ENCODE measurements at regions of chr9 and their contacts with region 1.

Region 1: GRCh38 chr9:109182940-109183798 is 16.1 kb upstream of the FRRS1L start:
- DNase-seq: peak; percentile 48
- ATAC-seq: no peak
- H3K4me3 Mint-ChIP-seq: no peak overlapping the region
- H3K27ac Mint-ChIP-seq: no peak overlapping the region
- H3K4me1 Mint-ChIP-seq: peaks cover 13% of the 10 kb centered on the region
- H3K27me3 Mint-ChIP-seq: peaks cover 14% of the 10 kb centered on the region

Region 2: GRCh38 chr9:108885643-108886348 is 297.4 kb before region 1 on chr9:
- CTCF ChIA-PET with region 1: interaction called, 3 read pairs
- POLR2A ChIA-PET with region 1: no interaction called
- intact Hi-C with region 1: loop called in 1 of 2 experiments (anchors 1 kb)
- DNase-seq: peak; percentile 81
- ATAC-seq: peak; percentile 100
- H3K4me3 Mint-ChIP-seq: peak overlapping the region; percentile 50
- H3K27ac Mint-ChIP-seq: peak overlapping the region; percentile 77
- H3K4me1 Mint-ChIP-seq: peaks cover 20% of the 10 kb centered on the region
- H3K27me3 Mint-ChIP-seq: no peaks in the 10 kb centered on the region

Region 3: DNA sequence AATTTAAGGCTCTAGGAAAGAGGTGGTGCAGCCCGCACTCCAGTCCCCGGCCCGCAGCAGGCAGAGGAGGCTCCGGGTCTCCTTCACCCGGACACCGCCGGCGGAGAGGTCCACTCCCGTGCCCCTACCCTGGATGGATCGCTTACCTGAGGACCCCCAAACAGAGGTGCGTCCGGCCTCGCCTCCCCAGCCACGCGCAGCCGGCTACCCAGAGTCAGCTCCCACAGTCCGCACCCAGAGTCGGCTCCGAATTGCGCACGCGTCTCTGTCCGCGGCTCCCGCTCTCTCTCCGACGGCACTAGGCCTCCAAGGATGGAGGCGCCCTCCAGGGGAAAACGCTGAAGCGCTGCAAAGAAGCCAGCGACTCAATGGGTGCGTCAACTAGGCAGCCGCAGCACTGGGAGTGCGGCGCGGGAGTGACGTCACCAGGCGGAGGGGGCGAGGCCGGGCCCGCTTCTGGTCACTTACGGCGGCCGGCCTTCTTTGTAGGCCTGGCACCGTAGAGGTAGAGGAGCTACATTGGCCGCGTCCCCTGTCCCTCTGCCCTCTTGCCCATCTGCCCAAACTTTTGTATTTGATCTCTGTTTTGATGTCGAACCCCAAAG is 249.3 kb before region 1 on chr9 and contains the start of gene ELP1:
- CTCF ChIA-PET with region 1: no interaction called
- POLR2A ChIA-PET with region 1: no interaction called
- intact Hi-C with region 1: loop called in 1 of 2 experiments (anchors 1 kb)
- DNase-seq: peak; percentile 96
- ATAC-seq: peak; percentile 88
- H3K4me3 Mint-ChIP-seq: peak within 1 kb of the TSS; percentile 98
- H3K27ac Mint-ChIP-seq: peak within 1 kb of the TSS; percentile 95
- H3K4me1 Mint-ChIP-seq: peaks cover 29% of the 10 kb centered on the region
- H3K27me3 Mint-ChIP-seq: no peaks in the 10 kb centered on the region
- total RNA-seq, gene ELP1: 31.1 to 58.0 TPM

Region 4: DNA sequence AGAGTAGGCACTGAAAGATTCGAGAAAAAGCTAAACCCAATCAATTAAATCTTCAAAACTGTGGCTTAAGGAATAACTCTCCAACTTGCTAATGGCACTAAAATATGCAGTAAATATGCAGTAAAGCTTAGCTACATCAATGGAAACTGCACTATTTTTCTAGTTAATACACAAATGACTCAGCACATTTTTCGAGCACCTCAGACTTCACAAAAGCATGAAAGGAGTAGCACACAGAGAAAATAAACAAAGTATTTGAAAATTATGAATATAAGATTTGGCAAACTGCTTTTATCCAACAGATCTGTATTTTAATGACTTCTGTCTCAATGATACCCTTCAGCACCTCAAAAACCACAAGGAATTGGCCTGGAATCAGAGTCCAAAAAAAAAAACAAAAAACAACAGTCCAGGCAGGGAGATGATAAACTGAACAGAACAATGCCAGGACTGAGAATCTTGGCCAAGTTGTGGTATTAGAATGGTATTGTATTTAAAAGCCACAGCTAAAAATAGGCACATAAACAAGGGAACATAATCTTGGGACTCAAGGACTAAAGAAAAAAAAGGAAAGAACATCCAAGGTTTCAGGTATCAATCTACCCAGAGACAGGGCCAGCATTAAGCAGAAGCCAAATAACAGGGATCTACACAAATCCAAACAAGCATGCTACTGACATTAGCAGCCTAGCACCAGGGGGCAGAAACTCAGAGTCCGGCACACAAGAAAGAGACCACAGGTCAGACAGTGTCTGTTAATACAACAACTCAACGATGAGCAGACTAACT is 84.8 kb before region 1 on chr9:
- CTCF ChIA-PET with region 1: no interaction called
- POLR2A ChIA-PET with region 1: no interaction called
- intact Hi-C with region 1: loop called in 1 of 2 experiments (anchors 5 kb)
- DNase-seq: no peak
- ATAC-seq: no peak
- H3K4me3 Mint-ChIP-seq: no peak overlapping the region
- H3K27ac Mint-ChIP-seq: peak overlapping the region; percentile 89
- H3K4me1 Mint-ChIP-seq: peaks cover 92% of the 10 kb centered on the region
- H3K27me3 Mint-ChIP-seq: no peaks in the 10 kb centered on the region

Region 5: DNA sequence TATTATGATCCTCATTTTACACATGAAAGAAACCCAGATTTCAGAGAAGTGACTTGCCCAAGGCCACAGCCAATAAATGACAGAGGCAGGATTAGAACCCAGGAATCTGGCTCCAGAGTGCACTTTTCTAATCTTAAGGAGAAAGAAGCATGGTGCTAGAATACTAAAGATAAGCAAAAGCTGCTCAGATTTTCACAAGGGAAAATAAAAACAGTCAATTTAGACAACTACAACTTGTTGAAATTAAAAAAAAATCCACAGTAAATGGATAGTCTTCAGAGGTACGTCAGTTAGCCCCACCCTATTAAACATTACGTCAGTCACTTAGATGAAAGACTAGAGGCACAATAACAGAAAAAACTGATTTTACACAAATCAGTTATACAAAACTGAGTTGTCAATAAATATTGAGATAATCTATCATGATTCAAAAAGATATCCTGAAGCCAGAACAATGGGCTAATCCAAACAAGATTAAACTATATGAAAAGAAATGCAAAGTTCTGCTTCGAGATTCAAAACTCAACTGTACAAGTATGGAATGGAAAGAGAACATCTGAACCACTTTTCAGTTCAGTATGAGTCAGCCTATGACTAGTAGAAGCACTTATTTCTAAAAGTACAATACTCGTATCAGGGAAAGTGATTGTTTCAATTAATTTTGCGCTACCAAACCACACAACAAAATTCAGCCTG is 72.7 kb before region 1 on chr9:
- CTCF ChIA-PET with region 1: interaction called, 5 read pairs
- POLR2A ChIA-PET with region 1: interaction called, 4 read pairs
- intact Hi-C with region 1: loop called (anchors 2 to 5 kb)
- DNase-seq: no peak
- ATAC-seq: peak; percentile 64
- H3K4me3 Mint-ChIP-seq: peak overlapping the region; percentile 47
- H3K27ac Mint-ChIP-seq: peak overlapping the region; percentile 82
- H3K4me1 Mint-ChIP-seq: peaks cover 89% of the 10 kb centered on the region
- H3K27me3 Mint-ChIP-seq: no peaks in the 10 kb centered on the region

Region 6: DNA sequence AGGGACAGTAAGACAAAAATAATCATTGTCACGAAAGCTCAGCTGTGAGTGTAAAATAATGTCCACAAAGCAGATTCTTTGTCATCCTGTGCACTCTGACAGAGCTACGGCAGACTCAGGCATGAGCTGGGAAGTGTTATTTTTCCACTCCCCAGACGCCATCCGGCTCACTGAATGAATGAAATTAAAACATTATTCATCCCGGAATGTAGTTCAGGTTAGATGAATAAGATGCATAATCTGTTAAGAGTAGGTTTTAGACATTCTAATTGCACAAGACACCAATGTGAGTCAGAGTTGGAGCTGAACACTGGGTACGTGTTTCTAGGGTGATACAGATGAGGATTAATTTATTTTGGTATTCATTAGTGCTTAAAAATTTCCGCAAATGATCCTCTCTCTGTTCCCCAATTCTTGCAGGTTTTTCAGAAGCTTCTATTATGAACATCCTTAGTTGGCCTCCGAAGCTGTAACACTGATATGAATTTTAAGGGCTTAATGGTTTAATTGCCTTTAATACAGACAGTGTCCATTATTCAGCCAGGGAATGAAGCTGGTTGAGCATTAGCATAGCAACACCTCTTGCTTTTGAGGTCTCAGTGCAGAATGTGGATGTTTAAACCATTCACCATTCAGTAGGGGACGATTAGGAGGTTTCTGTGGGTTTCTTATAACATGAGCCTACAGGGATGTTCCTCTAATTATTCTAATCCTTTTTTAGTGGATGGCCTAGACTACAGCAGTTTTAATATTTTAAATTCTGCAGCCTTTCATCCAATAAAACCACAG is 49.5 kb after region 1 on chr9:
- CTCF ChIA-PET with region 1: no interaction called
- POLR2A ChIA-PET with region 1: no interaction called
- intact Hi-C with region 1: no loop called
- DNase-seq: no peak
- ATAC-seq: no peak
- H3K4me3 Mint-ChIP-seq: no peak overlapping the region
- H3K27ac Mint-ChIP-seq: no peak overlapping the region
- H3K4me1 Mint-ChIP-seq: no peaks in the 10 kb centered on the region
- H3K27me3 Mint-ChIP-seq: peaks cover 17% of the 10 kb centered on the region

Region 7: GRCh38 chr9:109411798-109412352 is 228.7 kb after region 1 on chr9:
- CTCF ChIA-PET with region 1: no interaction called
- POLR2A ChIA-PET with region 1: no interaction called
- intact Hi-C with region 1: loop called in 1 of 2 experiments (anchors 5 kb)
- DNase-seq: peak; percentile 66
- ATAC-seq: peak; percentile 57
- H3K4me3 Mint-ChIP-seq: no peak overlapping the region
- H3K27ac Mint-ChIP-seq: peak overlapping the region; percentile 67
- H3K4me1 Mint-ChIP-seq: peaks cover 42% of the 10 kb centered on the region
- H3K27me3 Mint-ChIP-seq: peaks cover 17% of the 10 kb centered on the region

Region 8: GRCh38 chr9:109469646-109470358 is 286.6 kb after region 1 on chr9:
- CTCF ChIA-PET with region 1: no interaction called
- POLR2A ChIA-PET with region 1: no interaction called
- intact Hi-C with region 1: loop called in 1 of 2 experiments (anchors 5 kb)
- DNase-seq: peak; percentile 85
- ATAC-seq: peak; percentile 97
- H3K4me3 Mint-ChIP-seq: no peak overlapping the region
- H3K27ac Mint-ChIP-seq: no peak overlapping the region
- H3K4me1 Mint-ChIP-seq: peaks cover 8% of the 10 kb centered on the region
- H3K27me3 Mint-ChIP-seq: peaks cover 11% of the 10 kb centered on the region

Measured in activated CD4-positive, alpha-beta T cell treated with anti-CD3 and anti-CD28 coated beads for 36 hours (primary cell).